PC-9 (cell line): ENCODE measurements at regions of chr11 and their contacts with region 1.

Region 1: GRCh38 chr11:73307323-73308002 is 613 bp upstream of the ARHGEF17 start:
- DNase-seq: peak; percentile 96 to 99
- H3K4me3 ChIP-seq: peak overlapping the region; percentile 95
- H3K27ac ChIP-seq: peak overlapping the region; percentile 79
- H3K4me1 ChIP-seq: peaks cover 22% of the 10 kb centered on the region
- H3K27me3 ChIP-seq: no peaks in the 10 kb centered on the region
- CTCF ChIP-seq: peak; percentile 93

Region 2: DNA sequence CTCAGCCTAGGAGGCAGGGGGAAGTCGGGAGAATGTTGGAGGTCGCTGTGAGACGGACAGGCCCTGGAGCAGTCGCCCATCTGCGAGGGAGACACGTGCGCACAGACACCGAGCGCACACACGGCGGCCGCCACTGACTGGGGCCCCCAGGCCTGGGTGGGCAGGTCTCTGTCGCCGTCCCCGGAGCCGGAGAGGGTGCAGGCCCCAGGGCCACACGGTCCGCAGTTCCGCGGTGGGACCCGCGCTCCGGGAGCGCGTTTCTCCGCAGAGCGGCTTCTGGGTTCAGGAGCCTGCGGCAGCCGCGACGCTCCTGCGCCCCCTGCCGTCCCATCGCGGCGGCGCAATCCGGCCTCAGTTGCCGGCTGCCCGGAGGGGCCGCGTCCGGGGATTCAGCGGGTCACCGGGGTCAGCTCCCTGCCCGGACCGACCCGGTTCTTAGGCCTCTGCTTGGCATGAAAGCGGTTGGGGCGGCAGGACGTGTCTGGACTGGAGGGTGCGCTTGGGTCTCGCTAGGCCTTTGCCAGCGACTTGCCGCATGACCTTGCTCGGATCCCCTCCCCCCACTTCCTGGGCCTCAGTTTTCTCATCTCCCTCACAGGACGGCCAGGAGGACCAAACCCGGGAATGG is 664.5 kb before region 1 on chr11:
- CTCF ChIA-PET with region 1: no interaction called
- POLR2A ChIA-PET with region 1: interaction called, 12 read pairs
- intact Hi-C with region 1: no loop called
- DNase-seq: peak in 1 of 2 experiments; percentile 71
- H3K4me3 ChIP-seq: peak overlapping the region; percentile 74
- H3K27ac ChIP-seq: no peak overlapping the region
- H3K4me1 ChIP-seq: peaks cover 17% of the 10 kb centered on the region
- H3K27me3 ChIP-seq: peaks cover 16% of the 10 kb centered on the region
- CTCF ChIP-seq: peak; percentile 94

Region 3: GRCh38 chr11:73198677-73199076 is 108.8 kb before region 1 on chr11:
- CTCF ChIA-PET with region 1: no interaction called
- POLR2A ChIA-PET with region 1: no interaction called
- intact Hi-C with region 1: no loop called
- DNase-seq: peak in 1 of 2 experiments; percentile 96
- H3K4me3 ChIP-seq: no peak overlapping the region
- H3K27ac ChIP-seq: peak overlapping the region; percentile 99
- H3K4me1 ChIP-seq: peaks cover 98% of the 10 kb centered on the region
- H3K27me3 ChIP-seq: no peaks in the 10 kb centered on the region
- CTCF ChIP-seq: no peak

Region 4: DNA sequence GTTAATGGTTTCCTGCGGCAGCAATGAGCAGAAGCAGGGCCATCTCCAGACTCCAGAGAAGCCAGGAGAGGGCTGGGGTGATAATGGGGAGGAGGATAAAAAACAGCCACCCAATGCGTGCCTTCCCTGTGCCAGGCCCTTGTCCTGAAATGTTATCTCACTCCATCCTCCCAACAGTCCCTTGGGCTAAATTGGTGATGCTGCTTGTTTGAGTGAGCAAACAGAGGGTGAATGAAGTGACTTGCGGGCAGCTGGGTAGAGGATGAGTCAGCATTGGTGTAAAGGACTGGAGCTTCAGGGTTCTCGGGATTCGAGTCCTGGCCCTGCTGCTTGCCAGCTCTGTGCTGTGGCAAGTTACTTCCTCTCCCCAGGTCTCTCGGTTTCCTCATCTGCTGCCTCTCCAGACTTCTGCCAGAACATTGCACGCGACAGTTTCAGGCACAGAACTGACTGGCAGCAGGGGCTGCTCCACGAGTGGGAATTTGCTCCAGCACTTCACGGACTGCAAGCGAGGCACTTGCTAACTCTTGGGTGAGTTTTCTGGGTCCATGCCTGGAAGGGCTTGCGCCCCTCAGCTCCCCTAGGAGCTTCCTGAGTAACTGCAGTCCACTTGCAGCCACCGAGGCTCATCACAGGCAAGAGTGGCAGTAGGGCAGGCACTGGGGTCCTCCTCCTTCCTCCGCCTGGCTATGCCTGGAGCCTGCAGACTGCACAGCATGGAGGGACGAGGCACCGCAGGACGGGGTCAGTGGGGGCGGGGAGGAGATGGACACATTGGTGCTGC is 35.3 kb before region 1 on chr11 and contains the start of gene P2RY6:
- CTCF ChIA-PET with region 1: no interaction called
- POLR2A ChIA-PET with region 1: interaction called, 12 read pairs
- intact Hi-C with region 1: no loop called
- DNase-seq: peak; percentile 84 to 99
- H3K4me3 ChIP-seq: peak within 1 kb of the TSS; percentile 80
- H3K27ac ChIP-seq: peak within 1 kb of the TSS; percentile 85
- H3K4me1 ChIP-seq: peaks cover 74% of the 10 kb centered on the region
- H3K27me3 ChIP-seq: no peaks in the 10 kb centered on the region
- CTCF ChIP-seq: no peak
- total RNA-seq, gene P2RY6: 29.7 and 34.7 TPM in 2 replicates

Region 5: GRCh38 chr11:73350908-73351636 is 43.6 kb after region 1 on chr11:
- CTCF ChIA-PET with region 1: interaction called, 19 read pairs
- POLR2A ChIA-PET with region 1: interaction called, 5 read pairs
- intact Hi-C with region 1: loop called (anchors 1 kb)
- DNase-seq: peak; percentile 61 to 63
- H3K4me3 ChIP-seq: no peak overlapping the region
- H3K27ac ChIP-seq: no peak overlapping the region
- H3K4me1 ChIP-seq: no peaks in the 10 kb centered on the region
- H3K27me3 ChIP-seq: no peaks in the 10 kb centered on the region
- CTCF ChIP-seq: peak; percentile 99

Region 6: GRCh38 chr11:73393479-73394380 is 86.3 kb after region 1 on chr11:
- CTCF ChIA-PET with region 1: interaction called, 5 read pairs
- POLR2A ChIA-PET with region 1: no interaction called
- intact Hi-C with region 1: loop called (anchors 1 kb)
- DNase-seq: peak; percentile 52 to 78
- H3K4me3 ChIP-seq: no peak overlapping the region
- H3K27ac ChIP-seq: no peak overlapping the region
- H3K4me1 ChIP-seq: 0 out of 2 replicates have a peak, but pooled peaks cover 1% of the 10 kb centered on the region
- H3K27me3 ChIP-seq: no peaks in the 10 kb centered on the region
- CTCF ChIP-seq: peak; percentile 87

Region 7: DNA sequence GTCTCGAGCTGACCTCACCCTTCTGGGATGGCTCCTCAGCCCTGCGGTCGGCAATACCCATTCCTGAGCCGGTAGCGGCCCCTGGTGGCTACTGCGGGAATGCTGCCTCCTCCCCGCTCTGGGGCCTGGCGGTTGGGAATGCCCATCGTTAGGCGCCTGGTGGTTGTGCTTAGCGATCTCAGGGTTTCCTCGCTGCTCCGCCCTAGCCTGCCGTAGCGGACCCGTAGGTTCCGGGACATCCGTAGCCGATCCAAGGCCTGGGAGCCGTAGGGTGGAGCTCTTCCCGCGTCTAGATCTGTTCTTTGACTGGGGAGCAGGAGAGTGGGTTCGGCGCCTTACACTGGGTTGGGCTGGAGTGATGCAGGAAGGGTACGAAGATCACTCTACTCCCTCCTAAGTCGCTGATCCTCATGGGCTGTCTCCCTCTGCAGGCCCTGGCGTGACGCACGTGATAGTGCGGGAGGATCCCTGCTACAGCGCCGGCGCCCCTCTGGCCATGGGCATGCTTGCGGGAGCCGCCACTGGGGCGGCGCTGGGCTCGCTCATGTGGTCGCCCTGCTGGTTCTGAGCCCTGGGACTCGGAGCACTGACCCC is 353.7 kb after region 1 on chr11:
- CTCF ChIA-PET with region 1: interaction called, 14 read pairs
- POLR2A ChIA-PET with region 1: interaction called, 4 read pairs
- intact Hi-C with region 1: loop called (anchors 2 kb)
- DNase-seq: peak; percentile 50 to 87
- H3K4me3 ChIP-seq: no peak overlapping the region
- H3K27ac ChIP-seq: no peak overlapping the region
- H3K4me1 ChIP-seq: peaks cover 14% of the 10 kb centered on the region
- H3K27me3 ChIP-seq: no peaks in the 10 kb centered on the region
- CTCF ChIP-seq: peak; percentile 97